Natural killer cell (primary cell): ENCODE measurements at regions of chr14 and their contacts with region 1.

Region 1: GRCh38 chr14:50532502-50533240 is at the start of gene MAP4K5:
- DNase-seq: peak; percentile 87 to 94
- ATAC-seq: peak; percentile 93 to 98 (median 97)
- H3K4me3 ChIP-seq: peak within 1 kb of the TSS; percentile 60
- H3K4me3 Mint-ChIP-seq: peak within 1 kb of the TSS; percentile 94
- H3K27ac ChIP-seq: peak within 1 kb of the TSS; percentile 67
- H3K27ac Mint-ChIP-seq: peak within 1 kb of the TSS; percentile 82
- H3K4me1 ChIP-seq: peaks cover 7% of the 10 kb centered on the region
- H3K4me1 Mint-ChIP-seq: peaks cover 43 to 45% of the 10 kb centered on the region in 2 donors
- H3K27me3 ChIP-seq: no peaks in the 10 kb centered on the region
- H3K27me3 Mint-ChIP-seq: peaks cover 3 to 12% of the 10 kb centered on the region in 2 donors
- CTCF ChIP-seq: peak; percentile 73
- total RNA-seq, gene MAP4K5: 63.3 to 74.6 (median 65.9) TPM

Region 2: GRCh38 chr14:49867831-49868723 is 664.6 kb before region 1 on chr14:
- intact Hi-C with region 1: loop called (anchors 5 kb)
- DNase-seq: peak; percentile 94 to 98
- ATAC-seq: peak; percentile 86 to 97 (median 92)
- H3K4me3 ChIP-seq: peak overlapping the region; percentile 48
- H3K4me3 Mint-ChIP-seq: peak overlapping the region; percentile 92
- H3K27ac ChIP-seq: peak overlapping the region; percentile 93
- H3K27ac Mint-ChIP-seq: peak overlapping the region; percentile 94 to 100
- H3K4me1 ChIP-seq: peaks cover 33% of the 10 kb centered on the region
- H3K4me1 Mint-ChIP-seq: peaks cover 15 to 18% of the 10 kb centered on the region in 2 donors
- H3K27me3 ChIP-seq: no peaks in the 10 kb centered on the region
- H3K27me3 Mint-ChIP-seq: no peaks in the 10 kb centered on the region
- CTCF ChIP-seq: no peak

Region 3: DNA sequence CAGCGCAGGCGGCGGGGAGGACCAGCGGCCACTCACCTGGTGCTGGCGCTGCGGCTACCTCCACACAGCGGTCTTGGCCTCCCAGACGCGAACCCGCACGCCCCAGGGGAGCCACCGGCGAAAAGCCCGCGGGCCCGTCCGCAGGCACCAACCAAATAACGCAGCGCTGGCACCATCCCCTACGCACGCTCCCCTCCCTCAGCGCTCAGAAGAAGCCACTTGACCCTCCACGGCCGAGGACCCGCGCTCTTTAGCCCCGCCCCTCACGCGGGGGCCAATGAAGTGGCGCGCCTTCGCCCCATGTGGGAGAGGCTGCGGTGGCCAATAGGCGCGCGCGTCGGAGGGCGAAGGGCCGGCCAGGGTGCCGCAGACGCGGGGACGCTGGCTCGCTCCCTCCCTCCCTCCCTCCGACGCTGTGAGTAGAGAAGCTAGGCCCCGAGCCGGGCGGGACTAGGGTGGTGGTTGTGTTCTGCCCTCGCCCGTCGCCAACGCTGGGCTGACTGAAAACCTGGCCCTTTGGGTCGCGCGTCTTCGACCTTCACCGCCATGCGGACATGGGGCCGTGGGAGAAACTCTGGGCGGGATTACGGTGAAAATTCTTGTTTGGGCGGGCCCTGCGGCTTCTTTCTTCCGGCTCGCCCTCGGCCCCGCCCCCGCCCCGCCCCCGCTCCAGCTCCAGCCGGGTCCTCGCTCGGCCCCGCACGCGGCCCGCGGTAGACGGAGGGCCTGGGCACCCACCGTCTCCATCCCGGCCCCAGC is 220.5 kb before region 1 on chr14 and contains the starts of genes DMAC2L and L2HGDH:
- intact Hi-C with region 1: loop called (anchors 2 kb)
- DNase-seq: peak; percentile 89 to 94
- ATAC-seq: peak; percentile 90 to 98 (median 90)
- H3K4me3 ChIP-seq: peak within 1 kb of the TSS; percentile 84
- H3K4me3 Mint-ChIP-seq: peak within 1 kb of the TSS; percentile 94
- H3K27ac ChIP-seq: peak within 1 kb of the TSS; percentile 89
- H3K27ac Mint-ChIP-seq: peak within 1 kb of the TSS; percentile 94 to 95
- H3K4me1 ChIP-seq: peaks cover 18% of the 10 kb centered on the region
- H3K4me1 Mint-ChIP-seq: peaks cover 27 to 46% of the 10 kb centered on the region in 2 donors
- H3K27me3 ChIP-seq: no peaks in the 10 kb centered on the region
- H3K27me3 Mint-ChIP-seq: no peaks in the 10 kb centered on the region
- CTCF ChIP-seq: no peak
- total RNA-seq, gene DMAC2L: 24.7 to 28.7 (median 25.0) TPM
- total RNA-seq, gene L2HGDH: 4.2 to 5.6 (median 5.4) TPM

Region 4: DNA sequence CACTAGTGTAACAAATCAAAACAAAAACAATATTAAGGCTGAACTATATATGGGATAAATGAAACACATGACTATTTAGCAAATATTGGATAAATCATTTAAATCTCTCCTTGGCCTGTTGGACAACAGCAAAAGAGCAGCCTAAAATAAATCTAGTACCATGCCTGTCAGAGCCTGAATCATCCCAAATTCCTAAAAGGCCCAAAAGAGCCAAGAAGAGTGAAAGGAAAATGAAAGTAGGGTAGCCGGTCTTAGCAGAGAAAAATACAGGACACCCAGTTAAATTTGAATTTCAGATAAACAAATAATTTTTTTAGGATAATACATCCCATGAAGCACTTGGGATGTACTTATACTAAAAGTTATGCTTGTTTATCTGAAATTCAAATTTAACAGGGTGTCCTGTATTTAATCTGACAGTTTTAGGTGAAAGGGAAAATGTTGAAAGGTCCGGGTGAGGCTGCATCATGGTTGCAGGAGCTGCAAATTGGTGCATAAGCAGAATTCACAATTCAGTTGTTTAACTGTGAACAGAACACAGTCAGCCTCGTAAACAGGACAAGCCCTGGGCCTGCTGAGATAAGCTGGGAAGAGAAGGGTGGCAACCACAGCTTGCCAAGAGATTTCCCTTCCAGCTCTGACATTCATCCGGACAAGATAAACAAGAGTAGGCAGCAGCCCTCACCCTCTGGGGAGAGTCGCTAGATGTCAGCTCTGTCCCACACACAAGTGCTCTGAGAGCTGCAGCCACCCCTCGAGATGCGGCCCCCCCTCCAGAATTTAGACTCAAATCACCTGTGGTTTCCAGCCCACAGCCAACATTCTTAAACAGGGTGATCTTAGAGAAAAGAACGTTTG is 190.2 kb before region 1 on chr14:
- intact Hi-C with region 1: loop called (anchors 5 kb)
- DNase-seq: peak in 1 of 2 donors; percentile 68
- ATAC-seq: peak; percentile 86 to 99 (median 93)
- H3K4me3 ChIP-seq: no peak overlapping the region
- H3K4me3 Mint-ChIP-seq: peak overlapping the region; percentile 40
- H3K27ac ChIP-seq: no peak overlapping the region
- H3K27ac Mint-ChIP-seq: peak overlapping the region in 1 of 2 donors; percentile 70
- H3K4me1 ChIP-seq: peaks cover 7% of the 10 kb centered on the region
- H3K4me1 Mint-ChIP-seq: peaks cover 16 to 27% of the 10 kb centered on the region in 2 donors
- H3K27me3 ChIP-seq: no peaks in the 10 kb centered on the region
- H3K27me3 Mint-ChIP-seq: no peaks in the 10 kb centered on the region
- CTCF ChIP-seq: peak; percentile 51

Region 5: DNA sequence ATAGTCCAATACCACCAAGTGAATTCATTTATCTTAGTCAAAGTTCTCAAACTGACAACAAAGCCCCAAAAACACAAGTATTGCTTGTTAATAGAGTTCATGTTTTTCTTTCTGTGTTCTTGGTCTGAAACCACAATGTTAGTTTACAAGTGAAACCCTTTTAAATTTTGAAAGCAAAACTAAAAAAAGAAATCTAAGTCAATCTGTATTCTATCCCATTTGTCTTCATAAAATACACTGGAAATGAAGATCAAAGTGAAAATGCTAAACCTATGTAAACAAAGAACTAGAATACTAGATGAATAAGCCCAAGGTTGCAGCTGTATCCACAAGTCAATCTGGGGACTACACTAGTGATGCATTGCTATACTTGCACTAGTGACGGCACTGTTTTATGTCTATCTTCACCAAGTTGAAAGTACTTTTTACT is 10.7 kb before region 1 on chr14:
- intact Hi-C with region 1: loop called (anchors 1 kb)
- DNase-seq: peak in 1 of 2 donors; percentile 35
- ATAC-seq: peak; percentile 39 to 61 (median 50)
- H3K4me3 ChIP-seq: peak overlapping the region; percentile 16
- H3K4me3 Mint-ChIP-seq: peak overlapping the region; percentile 79
- H3K27ac ChIP-seq: peak overlapping the region; percentile 84
- H3K27ac Mint-ChIP-seq: peak overlapping the region; percentile 93 to 97
- H3K4me1 ChIP-seq: peaks cover 12% of the 10 kb centered on the region
- H3K4me1 Mint-ChIP-seq: peaks cover 48 to 51% of the 10 kb centered on the region in 2 donors
- H3K27me3 ChIP-seq: no peaks in the 10 kb centered on the region
- H3K27me3 Mint-ChIP-seq: no peaks in the 10 kb centered on the region
- CTCF ChIP-seq: no peak